Activated CD4-positive, alpha-beta T cell treated with anti-CD3 and anti-CD28 coated beads, Interleukin-2, amount 10 ng/mL, durations not matched to agents 7 days and 5 days (primary cell): ENCODE measurements at regions of chr10 and their contacts with region 1.

Region 1: DNA sequence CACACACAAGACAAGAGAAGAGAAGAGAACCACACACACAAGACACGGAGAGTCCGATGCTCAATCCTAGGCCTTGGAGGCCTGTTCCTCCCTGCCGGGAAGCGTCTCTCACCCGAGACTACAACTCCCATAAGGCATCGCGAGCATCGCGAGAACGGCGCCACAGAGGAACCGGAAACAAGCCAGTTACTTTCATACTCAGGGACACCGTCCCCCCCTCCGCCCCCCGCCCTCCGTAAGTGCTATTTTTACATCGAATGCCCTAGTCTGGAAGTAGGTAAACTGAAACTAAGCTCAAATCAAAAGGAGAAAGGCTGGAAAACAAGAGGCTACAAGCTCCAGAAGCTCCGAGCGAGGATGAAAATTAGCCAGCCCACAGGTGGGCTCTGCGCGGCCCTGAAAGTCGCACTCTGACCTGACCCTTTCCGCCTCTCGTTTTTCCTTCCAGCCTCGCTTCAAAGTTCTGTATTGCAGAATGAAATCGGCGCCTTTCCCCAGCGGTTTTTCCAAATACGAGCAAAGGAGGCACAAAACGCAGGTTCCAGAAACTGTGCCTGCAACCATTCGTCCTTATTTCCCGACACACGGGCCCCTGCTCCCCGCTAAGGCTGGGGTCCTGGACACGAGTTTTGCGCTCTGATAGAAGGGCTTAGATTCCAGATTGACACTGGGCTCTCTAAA is 11.5 kb upstream of the DNAJC12 start:
- DNase-seq: peak; percentile 95
- H3K4me3 Mint-ChIP-seq: peak overlapping the region; percentile 84
- H3K27ac Mint-ChIP-seq: peak overlapping the region; percentile 93
- H3K4me1 Mint-ChIP-seq: peaks cover 13% of the 10 kb centered on the region
- H3K27me3 Mint-ChIP-seq: no peaks in the 10 kb centered on the region

Region 2: DNA sequence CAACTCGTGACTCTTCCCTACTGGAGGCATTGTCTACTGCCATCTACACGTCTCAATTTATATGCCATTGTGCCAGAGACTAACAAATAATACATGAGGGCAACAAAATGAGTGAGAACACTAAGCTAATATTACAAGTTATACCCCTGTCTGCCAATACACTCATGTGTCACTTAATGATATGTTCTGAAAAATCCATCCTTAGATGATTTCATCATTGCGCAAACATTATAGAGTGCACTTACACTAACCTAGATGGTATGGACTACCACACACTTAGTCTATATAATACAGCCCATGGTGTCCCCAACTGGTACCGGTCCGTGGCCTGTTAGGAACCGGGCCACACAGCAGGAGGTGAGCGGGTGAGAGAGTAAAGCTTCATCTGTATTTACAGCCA is 89.2 kb before region 1 on chr10:
- CTCF ChIA-PET with region 1: no interaction called
- POLR2A ChIA-PET with region 1: no interaction called
- DNase-seq: no peak
- H3K4me3 Mint-ChIP-seq: no peak overlapping the region
- H3K27ac Mint-ChIP-seq: no peak overlapping the region
- H3K4me1 Mint-ChIP-seq: peaks cover 13% of the 10 kb centered on the region
- H3K27me3 Mint-ChIP-seq: peaks cover 10% of the 10 kb centered on the region

Region 3: DNA sequence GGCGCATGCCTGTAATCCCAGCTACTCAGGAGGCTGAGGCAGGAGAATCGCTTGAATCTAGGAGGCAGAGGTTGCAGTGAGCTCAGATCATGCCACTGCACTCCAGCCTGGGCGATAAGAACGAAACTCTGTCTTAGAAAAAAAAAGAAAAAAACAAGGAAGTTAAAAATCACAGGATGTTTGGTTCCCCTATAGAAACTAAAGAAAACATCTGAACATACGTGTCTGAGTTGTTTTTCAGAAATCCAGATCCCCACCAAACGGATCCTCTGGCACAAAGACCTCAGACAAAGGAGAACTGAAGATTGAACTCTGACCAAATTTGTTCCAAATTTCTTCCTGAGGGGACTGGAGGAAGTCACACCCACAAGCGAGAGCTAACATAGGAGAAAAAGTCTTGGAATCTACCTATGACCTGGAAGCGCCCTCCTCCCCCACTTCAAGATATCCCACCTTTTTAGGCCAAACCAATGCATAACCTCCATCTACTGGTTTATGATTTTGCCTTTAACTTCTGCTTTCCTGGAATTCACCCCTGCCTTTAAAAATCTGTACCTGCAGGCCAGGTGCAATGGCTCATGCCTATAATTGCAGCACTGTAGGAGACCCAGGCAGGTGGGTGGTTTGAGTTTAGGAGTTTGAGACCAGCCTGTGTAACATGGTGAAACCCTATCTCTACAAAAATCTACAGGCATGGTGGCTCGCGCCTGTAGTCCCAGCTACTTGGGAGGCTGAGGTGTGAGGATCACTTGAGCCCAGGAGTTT is 15.3 kb after region 1 on chr10:
- CTCF ChIA-PET with region 1: interaction called, 11 read pairs
- POLR2A ChIA-PET with region 1: no interaction called
- DNase-seq: no peak
- H3K4me3 Mint-ChIP-seq: no peak overlapping the region
- H3K27ac Mint-ChIP-seq: peak overlapping the region; percentile 5
- H3K4me1 Mint-ChIP-seq: no peaks in the 10 kb centered on the region
- H3K27me3 Mint-ChIP-seq: no peaks in the 10 kb centered on the region

Region 4: DNA sequence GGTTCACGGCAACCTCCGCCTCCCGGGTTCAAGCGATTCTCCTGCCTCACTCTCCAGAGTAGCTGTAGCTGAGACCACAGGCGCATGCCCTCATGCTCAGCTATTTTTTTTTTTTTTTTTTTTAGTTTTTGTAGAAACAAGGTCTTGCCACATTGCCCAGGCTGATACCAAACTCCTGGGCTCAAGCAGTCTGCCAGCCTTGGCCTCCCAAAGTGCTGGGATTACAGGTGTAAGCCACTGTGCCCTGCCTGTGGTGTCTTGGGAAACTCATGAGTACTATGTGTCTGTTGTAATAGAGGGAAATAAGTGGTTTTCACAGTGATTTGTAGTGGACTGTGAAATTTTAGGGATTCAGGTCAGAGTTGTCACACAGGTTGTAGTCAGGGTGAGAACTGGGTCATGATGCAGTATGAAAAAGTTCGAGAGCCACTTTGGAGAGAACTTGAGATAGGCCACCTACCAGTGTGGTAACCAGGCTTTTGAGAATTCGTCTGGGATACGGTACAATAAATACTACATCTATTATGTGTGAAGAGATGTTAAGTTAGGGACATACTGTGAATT is 65.4 kb after region 1 on chr10:
- CTCF ChIA-PET with region 1: no interaction called
- POLR2A ChIA-PET with region 1: no interaction called
- DNase-seq: no peak
- H3K4me3 Mint-ChIP-seq: no peak overlapping the region
- H3K27ac Mint-ChIP-seq: no peak overlapping the region
- H3K4me1 Mint-ChIP-seq: peaks cover 7% of the 10 kb centered on the region
- H3K27me3 Mint-ChIP-seq: no peaks in the 10 kb centered on the region

Region 5: GRCh38 chr10:68156373-68157185 is 307.1 kb after region 1 on chr10:
- CTCF ChIA-PET with region 1: interaction called, 16 read pairs
- POLR2A ChIA-PET with region 1: no interaction called
- DNase-seq: peak; percentile 75
- H3K4me3 Mint-ChIP-seq: no peak overlapping the region
- H3K27ac Mint-ChIP-seq: no peak overlapping the region
- H3K4me1 Mint-ChIP-seq: peaks cover 3% of the 10 kb centered on the region
- H3K27me3 Mint-ChIP-seq: no peaks in the 10 kb centered on the region

Region 6: GRCh38 chr10:68423522-68423921 is 574.1 kb after region 1 on chr10:
- CTCF ChIA-PET with region 1: no interaction called
- POLR2A ChIA-PET with region 1: no interaction called
- DNase-seq: peak; percentile 47
- H3K4me3 Mint-ChIP-seq: no peak overlapping the region
- H3K27ac Mint-ChIP-seq: peak overlapping the region; percentile 85
- H3K4me1 Mint-ChIP-seq: peaks cover 21% of the 10 kb centered on the region
- H3K27me3 Mint-ChIP-seq: no peaks in the 10 kb centered on the region